CD8-positive, alpha-beta T cell (primary cell): ENCODE measurements at regions of chr1 and their contacts with region 1.

Region 1: GRCh38 chr1:145996433-145997015 is at the start of gene TXNIP:
- DNase-seq: peak; percentile 63 to 97 (median 93)
- ATAC-seq: peak; percentile 73
- H3K4me3 ChIP-seq: peak within 1 kb of the TSS; percentile 71 to 94
- H3K4me3 Mint-ChIP-seq: peak within 1 kb of the TSS; percentile 96
- H3K27ac ChIP-seq: peak within 1 kb of the TSS; percentile 93 to 98
- H3K27ac Mint-ChIP-seq: peak within 1 kb of the TSS; percentile 98
- H3K4me1 ChIP-seq: peaks cover 40% of the 10 kb centered on the region
- H3K4me1 Mint-ChIP-seq: peaks cover 58% of the 10 kb centered on the region
- H3K27me3 ChIP-seq: no peaks in the 10 kb centered on the region
- H3K27me3 Mint-ChIP-seq: no peaks in the 10 kb centered on the region
- CTCF ChIP-seq: no peak
- total RNA-seq, gene TXNIP: 627 to 652 TPM

Region 2: DNA sequence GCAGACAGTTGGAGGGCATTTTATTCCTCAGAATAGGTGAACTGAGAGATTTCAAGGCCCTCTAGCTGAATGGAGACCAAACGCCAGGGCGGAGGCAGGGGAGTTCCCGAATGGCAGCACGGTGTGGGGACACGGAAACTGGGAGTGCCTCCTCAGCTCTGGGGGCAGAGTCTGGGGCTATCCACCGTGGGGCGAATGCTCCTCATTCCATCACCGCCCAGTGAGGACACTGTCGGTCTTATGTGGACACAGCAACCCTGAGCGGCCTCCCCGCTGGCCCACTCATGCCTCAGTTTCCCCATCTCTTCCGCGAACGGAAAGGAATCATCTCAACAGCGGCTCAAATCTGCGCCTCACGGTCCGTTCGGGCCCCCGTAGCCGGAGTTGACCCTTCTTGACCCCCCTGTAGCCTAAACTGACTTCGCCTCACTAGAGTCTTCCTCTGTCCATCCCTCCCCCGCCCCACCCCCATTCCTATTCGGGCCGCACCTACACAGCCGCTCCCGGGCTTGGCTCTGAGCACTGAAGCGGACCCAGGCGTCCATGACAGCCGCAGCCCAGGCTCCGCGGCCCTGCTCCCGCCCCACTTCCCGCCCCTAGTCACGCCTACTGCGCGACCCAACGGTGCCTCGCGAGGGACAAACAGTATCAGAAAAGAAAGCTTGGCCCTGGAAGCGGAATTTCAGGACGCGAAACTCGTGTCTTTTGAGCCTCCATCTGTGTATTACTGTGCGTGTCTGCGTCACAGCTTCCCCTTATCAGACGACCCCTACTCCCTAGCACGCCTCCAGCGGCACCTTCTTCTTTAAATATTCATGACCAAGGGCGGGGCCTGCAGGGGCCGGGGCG is 78.2 kb before region 1 on chr1 and contains the start of gene PEX11B:
- CTCF ChIA-PET with region 1: no interaction called
- POLR2A ChIA-PET with region 1: interaction called, 8 read pairs
- intact Hi-C with region 1: loop called in 1 of 2 experiments (anchors 2 kb)
- DNase-seq: peak; percentile 87 to 96 (median 93)
- ATAC-seq: peak; percentile 91
- H3K4me3 ChIP-seq: peak within 1 kb of the TSS; percentile 88 to 96
- H3K4me3 Mint-ChIP-seq: peak within 1 kb of the TSS; percentile 90
- H3K27ac ChIP-seq: peak within 1 kb of the TSS; percentile 74 to 86
- H3K27ac Mint-ChIP-seq: peak within 1 kb of the TSS; percentile 96
- H3K4me1 ChIP-seq: peaks cover 24% of the 10 kb centered on the region
- H3K4me1 Mint-ChIP-seq: peaks cover 43% of the 10 kb centered on the region
- H3K27me3 ChIP-seq: no peaks in the 10 kb centered on the region
- H3K27me3 Mint-ChIP-seq: no peaks in the 10 kb centered on the region
- CTCF ChIP-seq: no peak
- total RNA-seq, gene PEX11B: 11.8 TPM

Region 3: GRCh38 chr1:145957443-145958319 is 38.8 kb before region 1 on chr1 and contains the start of gene LIX1L:
- CTCF ChIA-PET with region 1: interaction called, 3 read pairs
- POLR2A ChIA-PET with region 1: interaction called, 39 read pairs
- intact Hi-C with region 1: no loop called
- DNase-seq: peak; percentile 87 to 98 (median 95)
- ATAC-seq: peak; percentile 85
- H3K4me3 ChIP-seq: peak within 1 kb of the TSS; percentile 51 to 65
- H3K4me3 Mint-ChIP-seq: peak within 1 kb of the TSS; percentile 93
- H3K27ac ChIP-seq: peak within 1 kb of the TSS; percentile 77 to 80
- H3K27ac Mint-ChIP-seq: peak within 1 kb of the TSS; percentile 98
- H3K4me1 ChIP-seq: peaks cover 57% of the 10 kb centered on the region
- H3K4me1 Mint-ChIP-seq: peaks cover 73% of the 10 kb centered on the region
- H3K27me3 ChIP-seq: no peaks in the 10 kb centered on the region
- H3K27me3 Mint-ChIP-seq: no peaks in the 10 kb centered on the region
- CTCF ChIP-seq: no peak
- total RNA-seq, gene LIX1L: 14.7 to 16.4 TPM

Region 4: GRCh38 chr1:145985502-145986439 is 10.8 kb before region 1 on chr1:
- CTCF ChIA-PET with region 1: interaction called, 386 read pairs
- POLR2A ChIA-PET with region 1: interaction called, 366 read pairs
- intact Hi-C with region 1: loop called (anchors 1 kb)
- DNase-seq: peak in 1 of 9 experiments; percentile 26
- ATAC-seq: no peak
- H3K4me3 ChIP-seq: peak overlapping the region in 1 of 2 experiments; percentile 8
- H3K4me3 Mint-ChIP-seq: peak overlapping the region; percentile 5
- H3K27ac ChIP-seq: peak overlapping the region in 1 of 2 experiments; percentile 34
- H3K27ac Mint-ChIP-seq: peak overlapping the region; percentile 91
- H3K4me1 ChIP-seq: peaks cover 76% of the 10 kb centered on the region
- H3K4me1 Mint-ChIP-seq: peaks cover 61% of the 10 kb centered on the region
- H3K27me3 ChIP-seq: no peaks in the 10 kb centered on the region
- H3K27me3 Mint-ChIP-seq: no peaks in the 10 kb centered on the region
- CTCF ChIP-seq: no peak

Region 5: GRCh38 chr1:146036965-146037646 is 40.6 kb after region 1 on chr1:
- CTCF ChIA-PET with region 1: interaction called, 4 read pairs
- POLR2A ChIA-PET with region 1: interaction called, 30 read pairs
- intact Hi-C with region 1: loop called (anchors 2 to 5 kb)
- DNase-seq: peak; percentile 51 to 87 (median 70)
- ATAC-seq: peak; percentile 54
- H3K4me3 ChIP-seq: peak overlapping the region; percentile 72 to 94
- H3K4me3 Mint-ChIP-seq: peak overlapping the region; percentile 97
- H3K27ac ChIP-seq: peak overlapping the region; percentile 60 to 63
- H3K27ac Mint-ChIP-seq: peak overlapping the region; percentile 95
- H3K4me1 ChIP-seq: peaks cover 14% of the 10 kb centered on the region
- H3K4me1 Mint-ChIP-seq: peaks cover 29% of the 10 kb centered on the region
- H3K27me3 ChIP-seq: no peaks in the 10 kb centered on the region
- H3K27me3 Mint-ChIP-seq: no peaks in the 10 kb centered on the region
- CTCF ChIP-seq: no peak